Activated CD4-positive, alpha-beta T cell treated with anti-CD3 and anti-CD28 coated beads, Interleukin-2, amount 10 ng/mL, durations not matched to agents 24 days and 14 days (primary cell): ENCODE measurements at regions of chr10 and their contacts with region 1.

Region 1: GRCh38 chr10:104353325-104354048 is at the start of gene CFAP58:
- DNase-seq: peak; percentile 98
- H3K4me3 Mint-ChIP-seq: no peak within 1 kb of the TSS
- H3K27ac Mint-ChIP-seq: no peak within 1 kb of the TSS
- H3K4me1 Mint-ChIP-seq: peaks cover 13% of the 10 kb centered on the region
- H3K27me3 Mint-ChIP-seq: no peaks in the 10 kb centered on the region
- total RNA-seq, gene CFAP58: 0.16 and 0.19 TPM in 2 replicates

Region 2: DNA sequence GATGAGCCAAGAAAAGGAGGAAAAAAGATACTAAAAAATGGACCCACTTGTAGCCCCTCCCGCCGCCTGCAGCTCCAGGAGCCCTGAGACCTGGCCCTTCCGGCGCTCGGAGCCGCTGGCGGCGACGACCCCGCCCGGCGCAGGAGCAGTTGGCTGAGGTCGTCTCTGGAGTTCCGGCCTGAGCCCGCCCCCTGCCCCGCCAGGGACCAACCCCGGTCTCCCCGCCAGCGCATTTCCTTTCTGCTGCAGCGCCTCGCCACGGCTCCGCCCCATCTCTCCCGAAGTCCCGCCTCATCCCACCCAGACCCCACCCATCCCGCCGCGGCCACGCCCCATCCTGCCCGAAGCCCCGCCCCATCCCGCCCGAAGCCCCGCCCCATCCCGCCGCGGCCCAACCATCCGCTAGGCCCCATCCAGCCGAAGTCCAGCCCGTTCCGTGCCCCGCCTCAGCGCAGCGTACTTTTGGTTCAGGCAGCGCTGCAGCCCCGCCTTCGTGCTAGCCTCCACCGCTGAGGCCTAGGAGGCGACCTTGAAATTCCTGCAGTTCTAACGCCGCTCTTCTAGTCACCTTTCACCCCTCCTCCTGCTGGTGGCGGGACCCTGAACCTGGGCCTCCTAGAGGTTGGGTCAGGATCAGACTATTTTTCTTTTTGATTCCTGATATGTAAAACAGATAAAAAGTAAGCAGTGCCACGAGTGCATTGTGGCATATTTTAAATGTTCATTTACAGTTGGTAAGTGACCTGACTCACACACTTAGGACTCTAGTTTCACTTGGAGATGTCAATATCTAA is 435.2 kb before region 1 on chr10 and contains the start of gene STN1:
- intact Hi-C with region 1: loop called (anchors 5 kb)
- DNase-seq: peak; percentile 98
- H3K4me3 Mint-ChIP-seq: peak within 1 kb of the TSS; percentile 97
- H3K27ac Mint-ChIP-seq: peak within 1 kb of the TSS; percentile 97
- H3K4me1 Mint-ChIP-seq: peaks cover 33% of the 10 kb centered on the region
- H3K27me3 Mint-ChIP-seq: no peaks in the 10 kb centered on the region
- total RNA-seq, gene STN1: 23.6 and 24.1 TPM in 2 replicates

Region 3: DNA sequence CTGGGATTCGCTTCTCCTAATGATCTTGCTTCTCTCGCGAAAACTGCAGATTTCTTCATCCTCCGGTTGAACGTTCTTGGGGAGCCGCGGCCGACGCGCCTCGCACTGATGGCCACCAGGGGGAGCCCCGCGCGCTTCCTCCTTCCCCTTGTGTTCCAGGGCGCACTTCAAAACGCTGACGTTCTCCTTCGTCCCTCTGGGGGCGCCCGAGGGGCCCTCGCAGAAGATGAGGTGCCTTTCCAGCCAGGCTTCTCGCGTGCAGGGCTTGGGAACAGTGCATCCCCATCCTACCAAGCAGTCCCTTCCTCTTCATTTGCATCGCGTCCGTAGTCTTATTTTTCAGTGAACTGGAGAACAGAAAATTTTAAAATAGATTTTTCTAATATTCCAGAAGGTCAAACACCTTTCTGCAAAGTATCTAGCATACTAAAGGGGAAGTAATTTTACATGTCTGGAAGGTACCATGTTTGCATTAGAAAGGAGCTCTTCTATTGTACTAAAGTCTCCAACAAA is 62.0 kb before region 1 on chr10:
- intact Hi-C with region 1: loop called (anchors 1 kb)
- DNase-seq: peak; percentile 96
- H3K4me3 Mint-ChIP-seq: no peak overlapping the region
- H3K27ac Mint-ChIP-seq: no peak overlapping the region
- H3K4me1 Mint-ChIP-seq: peaks cover 13% of the 10 kb centered on the region
- H3K27me3 Mint-ChIP-seq: peaks cover 32% of the 10 kb centered on the region

Region 4: DNA sequence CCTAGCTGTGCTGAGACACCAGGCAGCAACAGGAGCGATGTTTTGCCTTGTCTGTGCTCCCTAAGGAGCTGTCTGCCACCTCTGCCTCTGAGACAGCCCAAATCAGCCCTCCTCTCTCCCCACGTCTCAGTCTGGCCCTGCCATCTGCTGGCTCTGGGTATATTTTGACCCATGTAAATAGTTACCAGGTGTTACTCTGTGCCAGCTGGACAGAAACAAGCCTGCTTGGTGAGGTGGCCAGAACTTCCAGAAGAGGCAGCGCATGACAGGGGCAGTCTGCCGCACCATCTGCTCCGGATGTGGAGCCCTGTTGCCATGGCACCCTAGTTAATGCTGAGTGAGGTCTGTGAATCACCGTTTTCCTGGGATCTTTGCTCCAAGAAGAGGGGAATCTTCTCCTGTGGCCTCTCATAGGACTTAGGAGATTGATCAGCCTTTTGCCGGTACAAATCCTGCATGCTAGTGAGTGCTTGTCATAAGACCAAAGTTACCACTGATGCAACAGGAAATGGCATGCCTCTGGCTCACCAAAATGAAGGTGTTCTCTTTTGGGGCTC is 52.7 kb before region 1 on chr10:
- intact Hi-C with region 1: loop called (anchors 1 kb)
- DNase-seq: peak; percentile 79
- H3K4me3 Mint-ChIP-seq: peak overlapping the region; percentile 19
- H3K27ac Mint-ChIP-seq: peak overlapping the region; percentile 75
- H3K4me1 Mint-ChIP-seq: peaks cover 37% of the 10 kb centered on the region
- H3K27me3 Mint-ChIP-seq: no peaks in the 10 kb centered on the region

Region 5: DNA sequence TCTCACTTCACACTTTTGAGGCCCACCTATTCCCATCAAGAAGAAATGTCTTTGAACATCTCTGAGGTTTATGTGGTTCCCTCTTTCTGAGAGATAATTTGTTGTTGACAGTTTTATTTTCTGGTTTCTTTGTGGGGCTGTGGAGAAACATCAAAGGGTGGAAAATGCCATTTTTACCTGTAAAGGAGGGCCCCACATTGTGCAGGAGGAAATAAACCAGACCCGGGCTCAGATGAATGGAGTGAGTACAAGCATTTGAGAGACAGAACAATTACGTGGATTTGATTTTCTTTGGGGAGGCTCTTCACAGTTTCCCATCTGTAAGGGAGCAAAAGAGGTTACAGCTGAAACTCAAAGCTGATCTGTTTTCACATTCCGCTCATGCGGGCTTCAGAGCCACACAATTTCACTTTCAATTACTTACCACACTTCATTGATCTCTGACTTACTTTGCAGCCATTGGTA is 45.0 kb before region 1 on chr10:
- intact Hi-C with region 1: loop called (anchors 1 kb)
- DNase-seq: peak; percentile 86
- H3K4me3 Mint-ChIP-seq: peak overlapping the region; percentile 78
- H3K27ac Mint-ChIP-seq: peak overlapping the region; percentile 71
- H3K4me1 Mint-ChIP-seq: peaks cover 64% of the 10 kb centered on the region
- H3K27me3 Mint-ChIP-seq: no peaks in the 10 kb centered on the region

Region 6: DNA sequence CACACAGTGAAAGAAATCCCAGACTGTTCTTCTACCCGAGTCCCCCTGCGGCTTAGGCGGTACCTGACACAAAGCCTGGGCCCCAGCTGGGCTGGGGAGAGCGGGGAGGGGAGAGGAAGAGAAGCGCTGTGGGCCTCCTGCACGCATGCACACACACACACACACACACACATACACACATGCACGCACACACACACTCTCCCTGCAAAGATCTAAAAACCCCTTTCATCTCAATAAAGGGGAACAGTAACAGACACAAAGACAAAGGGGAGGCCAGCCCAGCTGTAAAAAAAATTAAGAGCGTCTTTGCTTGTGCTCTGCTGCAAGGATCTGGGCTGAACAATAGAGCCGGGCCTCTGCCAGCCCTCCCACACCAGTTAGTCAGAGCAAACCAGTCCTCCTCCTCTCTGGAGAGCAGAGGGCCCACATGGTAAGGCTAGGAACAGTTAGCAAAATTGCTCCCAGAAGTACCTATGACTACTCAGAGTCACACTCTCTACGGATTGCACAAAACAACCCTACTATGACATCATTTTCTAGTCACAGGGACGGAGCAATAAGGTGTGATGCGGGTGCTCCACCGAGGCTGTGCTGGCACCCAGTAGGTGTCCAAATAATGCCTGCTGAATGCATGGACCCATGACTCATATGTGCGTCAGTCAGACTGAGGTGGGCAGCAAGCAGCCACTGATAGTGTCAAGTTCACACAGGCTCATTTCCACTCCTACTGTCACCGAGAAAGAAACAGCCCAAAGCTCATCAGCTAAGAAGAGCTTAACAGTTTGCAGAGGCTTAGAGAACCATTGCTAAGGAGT is 24.4 kb before region 1 on chr10:
- intact Hi-C with region 1: loop called (anchors 1 kb)
- DNase-seq: peak; percentile 88
- H3K4me3 Mint-ChIP-seq: peak overlapping the region; percentile 86
- H3K27ac Mint-ChIP-seq: peak overlapping the region; percentile 91
- H3K4me1 Mint-ChIP-seq: peaks cover 89% of the 10 kb centered on the region
- H3K27me3 Mint-ChIP-seq: no peaks in the 10 kb centered on the region

Region 7: GRCh38 chr10:104337974-104338735 is 15.3 kb before region 1 on chr10 and contains the start of gene ITPRIP:
- intact Hi-C with region 1: loop called (anchors 1 kb)
- DNase-seq: peak; percentile 93
- H3K4me3 Mint-ChIP-seq: peak within 1 kb of the TSS; percentile 97
- H3K27ac Mint-ChIP-seq: peak within 1 kb of the TSS; percentile 100
- H3K4me1 Mint-ChIP-seq: peaks cover 51% of the 10 kb centered on the region
- H3K27me3 Mint-ChIP-seq: peaks cover 7% of the 10 kb centered on the region
- total RNA-seq, gene ITPRIP: 14.7 and 15.4 TPM in 2 replicates

Region 8: DNA sequence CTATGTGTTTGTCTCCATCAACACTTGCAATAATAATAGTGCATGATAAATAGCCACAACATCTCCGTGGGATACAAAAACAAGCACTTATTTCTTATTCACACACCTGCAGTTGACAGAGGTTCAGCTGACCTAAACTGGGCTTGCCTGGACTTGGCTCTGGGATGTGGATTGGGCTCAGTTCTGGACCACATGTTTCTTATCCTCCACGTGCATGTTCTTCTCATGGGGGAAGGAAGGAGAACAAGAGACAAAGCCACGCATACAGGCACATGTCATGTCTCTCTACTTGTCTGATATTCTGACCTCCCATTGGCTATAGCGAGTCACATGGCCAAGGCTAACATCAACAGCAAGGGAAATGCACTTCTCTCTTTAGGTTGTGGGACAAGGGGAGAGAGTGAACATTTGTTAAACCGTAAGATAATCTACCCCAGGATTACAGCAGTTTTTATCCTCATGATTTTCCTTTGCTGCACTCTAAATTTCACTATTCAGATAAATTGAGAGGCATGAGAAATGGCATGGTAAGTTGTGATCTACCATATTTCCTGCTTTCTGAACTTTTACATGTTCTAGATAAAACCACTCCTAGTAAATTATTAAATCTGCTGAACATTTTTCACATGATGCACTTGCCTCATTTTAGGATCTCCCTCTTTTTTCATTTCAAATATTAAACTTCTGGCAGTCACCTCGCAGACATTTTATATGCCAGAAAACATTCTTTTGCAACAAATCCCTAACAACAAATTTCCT is 33.8 kb after region 1 on chr10:
- intact Hi-C with region 1: no loop called
- DNase-seq: no peak
- H3K4me3 Mint-ChIP-seq: no peak overlapping the region
- H3K27ac Mint-ChIP-seq: no peak overlapping the region
- H3K4me1 Mint-ChIP-seq: peaks cover 11% of the 10 kb centered on the region
- H3K27me3 Mint-ChIP-seq: peaks cover 25% of the 10 kb centered on the region